ENCODE measurements at regions of chr11 and their contacts with region 1.

Region 1: DNA sequence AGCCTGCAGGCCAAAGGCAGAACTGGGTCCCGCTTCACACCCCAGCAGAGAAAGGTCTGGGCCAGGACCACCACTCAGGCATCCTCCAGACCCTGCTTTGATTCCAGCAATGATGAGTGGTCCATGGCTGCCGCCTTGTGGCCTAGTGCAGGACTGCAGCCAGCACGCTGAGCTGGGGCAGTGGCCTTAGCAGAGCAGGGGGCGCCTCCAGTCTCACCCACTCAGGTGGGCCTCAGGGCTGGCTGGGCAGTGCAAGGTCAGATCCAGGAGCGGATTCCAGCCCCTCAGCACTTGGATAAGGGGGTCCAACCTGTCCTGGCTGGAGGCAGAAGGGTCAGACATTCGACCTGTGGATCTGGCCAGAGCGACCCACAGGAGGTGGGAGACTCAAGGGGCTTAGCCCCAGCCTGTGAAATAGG is 9.6 kb upstream of the PDE2A start:
- DNase-seq: peak; percentile 83
- ATAC-seq: peak; percentile 60
- H3K4me3 Mint-ChIP-seq: no peak overlapping the region
- H3K27ac Mint-ChIP-seq: no peak overlapping the region
- H3K4me1 Mint-ChIP-seq: peaks cover 15% of the 10 kb centered on the region
- H3K27me3 Mint-ChIP-seq: no peaks in the 10 kb centered on the region

Region 2: DNA sequence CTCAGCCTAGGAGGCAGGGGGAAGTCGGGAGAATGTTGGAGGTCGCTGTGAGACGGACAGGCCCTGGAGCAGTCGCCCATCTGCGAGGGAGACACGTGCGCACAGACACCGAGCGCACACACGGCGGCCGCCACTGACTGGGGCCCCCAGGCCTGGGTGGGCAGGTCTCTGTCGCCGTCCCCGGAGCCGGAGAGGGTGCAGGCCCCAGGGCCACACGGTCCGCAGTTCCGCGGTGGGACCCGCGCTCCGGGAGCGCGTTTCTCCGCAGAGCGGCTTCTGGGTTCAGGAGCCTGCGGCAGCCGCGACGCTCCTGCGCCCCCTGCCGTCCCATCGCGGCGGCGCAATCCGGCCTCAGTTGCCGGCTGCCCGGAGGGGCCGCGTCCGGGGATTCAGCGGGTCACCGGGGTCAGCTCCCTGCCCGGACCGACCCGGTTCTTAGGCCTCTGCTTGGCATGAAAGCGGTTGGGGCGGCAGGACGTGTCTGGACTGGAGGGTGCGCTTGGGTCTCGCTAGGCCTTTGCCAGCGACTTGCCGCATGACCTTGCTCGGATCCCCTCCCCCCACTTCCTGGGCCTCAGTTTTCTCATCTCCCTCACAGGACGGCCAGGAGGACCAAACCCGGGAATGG is 40.8 kb before region 1 on chr11:
- CTCF ChIA-PET with region 1: interaction called, 4 read pairs
- POLR2A ChIA-PET with region 1: no interaction called
- intact Hi-C with region 1: loop called in 1 of 2 experiments (anchors 2 kb)
- DNase-seq: peak; percentile 79
- ATAC-seq: peak; percentile 88
- H3K4me3 Mint-ChIP-seq: no peak overlapping the region
- H3K27ac Mint-ChIP-seq: no peak overlapping the region
- H3K4me1 Mint-ChIP-seq: no peaks in the 10 kb centered on the region
- H3K27me3 Mint-ChIP-seq: peaks cover 4% of the 10 kb centered on the region

Region 3: DNA sequence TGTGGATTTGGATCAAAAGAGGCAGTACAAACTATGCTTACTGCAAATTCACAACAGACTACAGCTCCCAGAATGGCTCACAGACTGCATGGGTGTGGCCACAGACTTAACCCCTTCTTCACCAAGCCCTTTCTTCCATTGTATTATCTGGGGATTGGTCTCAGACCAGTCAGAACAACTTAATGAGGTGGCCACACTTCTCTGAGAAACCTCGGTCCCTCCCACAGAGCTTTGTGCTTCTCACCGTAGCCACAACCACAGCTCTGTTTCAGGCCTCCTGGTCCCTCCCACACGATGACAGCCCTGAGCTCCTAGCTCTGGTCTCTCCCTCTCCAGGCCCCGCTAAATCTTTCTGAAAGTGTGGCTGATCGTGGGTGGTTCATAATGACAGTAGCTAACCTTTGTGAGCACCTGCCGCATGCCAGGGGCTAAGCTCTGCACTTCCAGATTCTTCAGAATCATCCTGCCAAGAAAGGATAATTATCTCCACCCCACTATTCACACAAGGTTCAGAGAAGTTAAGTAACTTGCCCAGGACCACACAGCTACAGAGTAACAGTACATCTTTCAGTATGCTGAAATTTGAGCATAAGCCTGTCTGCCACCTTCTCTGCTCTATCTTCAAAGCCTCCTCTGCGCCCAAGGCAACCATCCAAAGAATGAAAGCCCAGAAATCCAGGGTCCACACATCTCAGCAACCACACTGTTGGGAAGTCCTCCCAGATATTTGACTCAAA is 15.0 kb before region 1 on chr11:
- CTCF ChIA-PET with region 1: interaction called, 23 read pairs
- POLR2A ChIA-PET with region 1: interaction called, 3 read pairs
- intact Hi-C with region 1: no loop called
- DNase-seq: peak; percentile 84
- ATAC-seq: peak; percentile 93
- H3K4me3 Mint-ChIP-seq: no peak overlapping the region
- H3K27ac Mint-ChIP-seq: no peak overlapping the region
- H3K4me1 Mint-ChIP-seq: peaks cover 11% of the 10 kb centered on the region
- H3K27me3 Mint-ChIP-seq: peaks cover 54% of the 10 kb centered on the region

Region 4: GRCh38 chr11:73126804-73127480 is 443.2 kb after region 1 on chr11:
- CTCF ChIA-PET with region 1: no interaction called
- POLR2A ChIA-PET with region 1: no interaction called
- intact Hi-C with region 1: no loop called
- DNase-seq: no peak
- ATAC-seq: no peak
- H3K4me3 Mint-ChIP-seq: no peak overlapping the region
- H3K27ac Mint-ChIP-seq: no peak overlapping the region
- H3K4me1 Mint-ChIP-seq: no peaks in the 10 kb centered on the region
- H3K27me3 Mint-ChIP-seq: no peaks in the 10 kb centered on the region

Region 5: GRCh38 chr11:73372371-73372993 is 688.7 kb after region 1 on chr11:
- CTCF ChIA-PET with region 1: no interaction called
- POLR2A ChIA-PET with region 1: no interaction called
- intact Hi-C with region 1: no loop called
- DNase-seq: no peak
- ATAC-seq: no peak
- H3K4me3 Mint-ChIP-seq: no peak overlapping the region
- H3K27ac Mint-ChIP-seq: no peak overlapping the region
- H3K4me1 Mint-ChIP-seq: peaks cover 18% of the 10 kb centered on the region
- H3K27me3 Mint-ChIP-seq: no peaks in the 10 kb centered on the region

Measured in activated CD4-positive, alpha-beta T cell treated with anti-CD3 and anti-CD28 coated beads for 36 hours (primary cell).